Transverse colon (tissue), 4 donors: ENCODE measurements at regions of chr21 and their contacts with region 1.

Region 1: DNA sequence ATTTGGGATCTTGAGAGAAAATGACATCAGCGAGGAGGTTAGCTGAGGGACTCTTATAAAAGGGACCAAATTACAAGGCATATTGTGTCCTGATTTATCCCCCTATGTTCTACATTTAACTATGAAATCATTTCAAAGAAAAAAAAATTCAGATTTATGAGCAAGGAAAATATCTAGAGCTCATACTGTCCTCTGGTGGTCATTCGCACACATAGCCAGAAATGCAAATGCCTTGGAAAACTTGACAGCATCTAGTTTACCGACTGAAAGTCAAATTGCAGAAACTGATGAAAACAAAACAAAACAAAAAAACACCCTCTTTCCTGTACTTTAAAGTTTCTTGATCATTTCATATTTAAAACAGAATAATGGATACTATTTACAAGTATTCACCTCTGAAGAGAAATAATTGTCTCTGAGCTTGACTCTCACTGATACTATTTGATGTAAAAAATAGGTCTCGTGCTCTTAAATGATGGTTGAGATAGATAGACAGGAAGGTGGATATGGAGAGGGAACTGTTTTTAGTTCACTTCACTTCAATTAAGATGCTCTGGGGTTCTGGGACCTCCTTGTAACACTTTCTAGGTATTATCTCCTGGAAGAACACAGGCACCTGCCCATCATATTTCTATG is 253.8 kb downstream of the PCP4 start:
- DNase-seq: no peak
- H3K4me3 ChIP-seq: no peak overlapping the region
- H3K27ac ChIP-seq: no peak overlapping the region
- H3K4me1 ChIP-seq: no peaks in the 10 kb centered on the region
- H3K27me3 ChIP-seq: no peaks in the 10 kb centered on the region
- CTCF ChIP-seq: peak; percentile 72 to 88 (median 74)
- EP300 ChIP-seq: no peak
- POLR2A ChIP-seq: no peak

Region 2: DNA sequence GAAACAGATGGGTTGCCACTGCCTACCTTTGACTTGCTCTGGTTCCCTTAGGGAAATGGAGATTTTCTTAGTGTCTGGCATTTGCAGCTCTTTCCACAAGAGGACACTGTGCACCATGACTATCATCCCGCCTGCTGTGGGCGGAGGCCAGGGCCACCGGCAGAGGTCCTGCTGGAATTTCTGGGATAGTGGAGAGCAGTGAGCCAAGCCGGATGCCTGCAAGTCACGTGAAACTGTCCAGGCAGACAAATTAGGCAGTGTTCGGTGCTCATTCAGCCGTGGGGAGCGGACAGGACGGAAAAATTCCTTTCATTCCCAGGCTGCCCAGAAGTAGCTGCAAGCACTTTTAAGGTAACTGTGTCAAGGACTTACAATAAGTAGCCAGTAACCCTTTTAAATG is 332.7 kb before region 1 on chr21:
- in situ Hi-C with region 1: loop called in 1 of 4 experiments (anchors 25 kb)
- intact Hi-C with region 1: loop called (anchors 5 kb)
- DNase-seq: peak; percentile 49
- H3K4me3 ChIP-seq: no peak overlapping the region
- H3K27ac ChIP-seq: peak overlapping the region in 2 of 4 donors; percentile 8 to 40
- H3K4me1 ChIP-seq: peaks cover 0 to 3% (median 0%) of the 10 kb centered on the region in 4 donors
- H3K27me3 ChIP-seq: no peaks in the 10 kb centered on the region
- CTCF ChIP-seq: peak; percentile 60 to 87 (median 67)
- EP300 ChIP-seq: peak; percentile 8
- POLR2A ChIP-seq: no peak

Region 3: GRCh38 chr21:39867198-39867650 is 253.8 kb before region 1 on chr21 and contains the start of gene PCP4:
- in situ Hi-C with region 1: loop called in 2 of 4 experiments (anchors 10 kb)
- intact Hi-C with region 1: loop called (anchors 5 kb)
- DNase-seq: peak; percentile 45
- H3K4me3 ChIP-seq: no peak within 1 kb of the TSS
- H3K27ac ChIP-seq: peak within 1 kb of the TSS in 1 of 4 donors; percentile 30
- H3K4me1 ChIP-seq: no peaks in the 10 kb centered on the region
- H3K27me3 ChIP-seq: no peaks in the 10 kb centered on the region
- CTCF ChIP-seq: peak; percentile 68 to 84 (median 79)
- EP300 ChIP-seq: no peak
- POLR2A ChIP-seq: no peak
- total RNA-seq, gene PCP4: 8.9 to 17.3 (median 13.1) TPM in 3 of 4 donors, not detected in the other

Region 4: GRCh38 chr21:40176724-40177123 is 55.7 kb after region 1 on chr21:
- in situ Hi-C with region 1: no loop called
- intact Hi-C with region 1: no loop called
- DNase-seq: no peak
- H3K4me3 ChIP-seq: no peak overlapping the region
- H3K27ac ChIP-seq: no peak overlapping the region
- H3K4me1 ChIP-seq: no peaks in the 10 kb centered on the region
- H3K27me3 ChIP-seq: no peaks in the 10 kb centered on the region
- CTCF ChIP-seq: no peak
- EP300 ChIP-seq: no peak
- POLR2A ChIP-seq: no peak

Region 5: GRCh38 chr21:40227096-40227495 is 106.0 kb after region 1 on chr21:
- in situ Hi-C with region 1: no loop called
- intact Hi-C with region 1: no loop called
- DNase-seq: no peak
- H3K4me3 ChIP-seq: no peak overlapping the region
- H3K27ac ChIP-seq: no peak overlapping the region
- H3K4me1 ChIP-seq: no peaks in the 10 kb centered on the region
- H3K27me3 ChIP-seq: no peaks in the 10 kb centered on the region
- CTCF ChIP-seq: no peak
- EP300 ChIP-seq: no peak
- POLR2A ChIP-seq: no peak